ENCODE measurements at regions of chr9 and their contacts with region 1.

Region 1: DNA sequence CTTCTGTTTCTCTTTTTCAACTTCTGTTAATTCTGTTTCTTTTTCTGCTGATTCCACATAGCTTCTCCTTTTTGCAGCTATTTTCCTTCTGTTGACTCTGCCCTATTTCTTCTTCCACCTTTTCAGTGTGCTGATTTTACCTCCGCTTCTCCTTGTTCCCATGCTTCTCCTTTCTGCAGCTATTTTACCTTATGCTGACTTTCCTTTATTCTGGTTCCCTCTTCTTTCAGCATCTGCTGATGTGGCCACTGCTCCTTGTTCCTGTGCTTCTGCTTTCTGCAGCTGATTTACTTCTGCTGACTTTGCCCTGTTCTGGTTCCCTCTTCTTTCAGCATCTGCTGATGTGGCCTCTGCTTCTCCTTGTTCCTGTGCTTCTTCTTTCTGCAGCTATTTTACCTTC is 58.8 kb downstream of the HACD4 start:
- DNase-seq: no peak
- ATAC-seq: no peak
- H3K4me3 ChIP-seq: no peak overlapping the region
- H3K27ac ChIP-seq: no peak overlapping the region
- H3K4me1 ChIP-seq: no peaks in the 10 kb centered on the region
- H3K27me3 ChIP-seq: no peaks in the 10 kb centered on the region
- CTCF ChIP-seq: no peak

Region 2: DNA sequence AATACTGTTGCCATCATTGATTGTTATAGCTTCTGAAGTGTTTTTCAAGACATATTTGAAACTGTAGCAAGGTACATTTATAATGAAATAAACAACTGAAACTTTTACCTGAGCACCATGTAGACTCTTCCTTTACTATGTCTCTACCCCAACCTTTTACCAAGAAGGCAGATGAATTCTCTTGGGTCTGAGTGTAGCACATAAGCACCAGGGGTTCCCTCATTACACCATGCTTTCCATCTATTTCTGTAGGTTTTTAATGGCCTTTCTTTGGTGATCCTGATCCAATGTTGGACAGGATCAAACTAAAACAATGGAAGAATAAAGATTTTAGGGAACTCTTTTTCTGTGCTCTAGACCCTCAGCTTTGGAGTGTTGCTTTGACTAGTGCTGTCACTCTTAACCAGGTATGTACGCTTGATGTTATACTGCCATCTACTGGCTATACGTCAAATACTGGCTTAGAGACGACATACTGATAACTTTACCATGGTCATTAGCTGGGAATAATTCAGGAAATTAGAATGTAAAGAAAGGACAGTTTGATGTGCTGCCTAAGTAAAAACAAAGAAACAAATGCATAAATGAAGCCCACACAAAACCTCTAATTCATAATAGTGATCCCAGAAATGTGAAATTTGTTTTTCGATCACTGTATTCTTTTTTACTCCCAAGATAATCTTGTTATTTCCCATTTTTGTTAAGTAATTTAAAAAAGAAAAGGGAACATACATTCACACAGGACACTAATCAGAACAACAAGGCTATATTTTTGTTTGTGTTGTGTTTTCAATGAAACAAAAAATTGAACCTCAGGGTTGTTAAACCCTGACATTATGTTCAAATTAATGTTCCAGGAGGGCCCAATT is 138.3 kb after region 1 on chr9:
- intact Hi-C with region 1: loop called in 1 of 2 experiments (anchors 10 kb)
- DNase-seq: no peak
- ATAC-seq: peak in 3 of 4 donors; percentile 66 to 86 (median 81)
- H3K4me3 ChIP-seq: no peak overlapping the region
- H3K27ac ChIP-seq: no peak overlapping the region
- H3K4me1 ChIP-seq: no peaks in the 10 kb centered on the region
- H3K27me3 ChIP-seq: no peaks in the 10 kb centered on the region
- CTCF ChIP-seq: peak; percentile 77

Region 3: GRCh38 chr9:21533597-21533996 is 560.9 kb after region 1 on chr9:
- intact Hi-C with region 1: no loop called
- DNase-seq: no peak
- ATAC-seq: no peak
- H3K4me3 ChIP-seq: no peak overlapping the region
- H3K27ac ChIP-seq: no peak overlapping the region
- H3K4me1 ChIP-seq: no peaks in the 10 kb centered on the region
- H3K27me3 ChIP-seq: peaks cover 0 to 2% (median 0%) of the 10 kb centered on the region in 3 donors
- CTCF ChIP-seq: no peak

Measured in psoas muscle (tissue), 8 donors.